Kidney (tissue), 22 donors: ENCODE measurements at regions of chr20 and their contacts with region 1.

Region 1: DNA sequence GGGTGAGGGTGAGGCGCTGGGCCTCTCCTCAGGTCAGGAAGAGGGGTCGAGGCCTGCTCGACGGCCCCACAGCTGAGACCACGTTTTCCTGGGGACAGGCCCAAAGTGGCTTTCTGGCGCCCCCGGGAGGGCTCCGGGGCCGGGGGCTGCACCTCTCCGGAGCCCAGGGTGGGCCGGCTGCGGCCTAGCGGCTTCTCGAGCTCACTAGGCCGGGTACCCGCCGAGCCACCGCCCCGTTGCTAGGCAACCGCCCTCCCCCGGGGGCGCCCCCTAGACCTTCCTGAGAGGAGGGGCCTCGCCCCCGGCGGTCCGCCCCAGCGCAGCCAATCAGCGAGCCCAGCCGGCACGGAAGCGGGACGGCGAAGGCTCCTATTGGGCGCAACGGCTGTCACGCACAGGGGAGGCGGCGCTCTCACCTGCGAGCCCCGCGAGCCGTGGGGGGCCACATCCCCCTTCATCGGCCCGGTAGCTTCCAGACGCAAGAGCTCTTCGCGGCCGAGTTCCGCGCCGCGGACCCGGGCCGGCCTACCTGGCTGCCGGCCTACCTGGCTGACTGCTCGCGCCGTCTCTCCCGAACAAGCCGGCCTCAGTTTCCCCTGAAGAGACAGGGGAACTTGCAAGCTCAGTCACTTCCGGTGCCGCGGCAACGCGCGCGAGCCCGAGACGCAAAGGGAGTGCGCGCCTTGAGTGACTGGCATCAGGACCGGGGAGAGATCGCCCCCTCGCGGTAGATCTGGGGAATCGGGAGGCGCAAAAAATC is 831 bp upstream of the BCL2L1 start:
- DNase-seq: peak; percentile 99 to 100 (median 99)
- H3K4me3 ChIP-seq: peak overlapping the region; percentile 75 to 85 (median 76)
- H3K27ac ChIP-seq: peak overlapping the region; percentile 98 to 99
- H3K4me1 ChIP-seq: peaks cover 4 to 19% (median 13%) of the 10 kb centered on the region in 3 donors
- H3K27me3 ChIP-seq: no peaks in the 10 kb centered on the region
- CTCF ChIP-seq: peak; percentile 97

Region 2: GRCh38 chr20:31605031-31605901 is 118.2 kb before region 1 on chr20 and contains the start of gene ID1:
- intact Hi-C with region 1: no loop called
- DNase-seq: peak; percentile 98 to 99 (median 99)
- H3K4me3 ChIP-seq: peak within 1 kb of the TSS; percentile 85 to 95 (median 93)
- H3K27ac ChIP-seq: peak within 1 kb of the TSS; percentile 93 to 94
- H3K4me1 ChIP-seq: peaks cover 6 to 14% (median 13%) of the 10 kb centered on the region in 3 donors
- H3K27me3 ChIP-seq: no peaks in the 10 kb centered on the region
- CTCF ChIP-seq: no peak
- total RNA-seq, gene ID1: 189 TPM

Region 3: DNA sequence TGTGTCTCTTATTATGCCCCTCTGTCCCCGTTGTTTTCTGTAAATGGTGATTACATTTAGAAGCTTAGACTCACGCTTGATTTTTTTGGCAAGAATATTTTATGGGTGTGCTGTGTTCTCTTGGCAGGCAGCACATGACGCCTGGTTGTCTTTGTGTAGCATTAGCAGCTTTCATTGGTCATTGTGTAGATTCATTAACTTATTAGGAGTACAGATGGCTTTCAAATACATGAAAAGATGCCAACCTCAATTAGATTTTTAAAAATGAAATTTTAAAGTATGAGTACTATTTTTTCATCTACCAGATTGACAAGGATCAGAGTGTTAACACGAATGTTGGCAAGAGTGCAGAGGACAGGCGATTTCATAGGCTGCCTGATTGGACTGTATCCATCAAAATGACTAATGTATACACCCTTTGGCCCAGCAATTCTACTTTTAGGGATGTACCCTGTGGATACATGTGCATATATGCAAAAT is 70.5 kb before region 1 on chr20:
- intact Hi-C with region 1: no loop called
- DNase-seq: peak in 1 of 5 donors; percentile 22
- H3K4me3 ChIP-seq: no peak overlapping the region
- H3K27ac ChIP-seq: no peak overlapping the region
- H3K4me1 ChIP-seq: no peaks in the 10 kb centered on the region
- H3K27me3 ChIP-seq: no peaks in the 10 kb centered on the region
- CTCF ChIP-seq: no peak

Region 4: GRCh38 chr20:31666258-31667042 is 57.0 kb before region 1 on chr20:
- intact Hi-C with region 1: loop called (anchors 5 kb)
- DNase-seq: no peak
- H3K4me3 ChIP-seq: no peak overlapping the region
- H3K27ac ChIP-seq: peak overlapping the region; percentile 73 to 92
- H3K4me1 ChIP-seq: peaks cover 0 to 69% (median 51%) of the 10 kb centered on the region in 3 donors
- H3K27me3 ChIP-seq: no peaks in the 10 kb centered on the region
- CTCF ChIP-seq: no peak

Region 5: DNA sequence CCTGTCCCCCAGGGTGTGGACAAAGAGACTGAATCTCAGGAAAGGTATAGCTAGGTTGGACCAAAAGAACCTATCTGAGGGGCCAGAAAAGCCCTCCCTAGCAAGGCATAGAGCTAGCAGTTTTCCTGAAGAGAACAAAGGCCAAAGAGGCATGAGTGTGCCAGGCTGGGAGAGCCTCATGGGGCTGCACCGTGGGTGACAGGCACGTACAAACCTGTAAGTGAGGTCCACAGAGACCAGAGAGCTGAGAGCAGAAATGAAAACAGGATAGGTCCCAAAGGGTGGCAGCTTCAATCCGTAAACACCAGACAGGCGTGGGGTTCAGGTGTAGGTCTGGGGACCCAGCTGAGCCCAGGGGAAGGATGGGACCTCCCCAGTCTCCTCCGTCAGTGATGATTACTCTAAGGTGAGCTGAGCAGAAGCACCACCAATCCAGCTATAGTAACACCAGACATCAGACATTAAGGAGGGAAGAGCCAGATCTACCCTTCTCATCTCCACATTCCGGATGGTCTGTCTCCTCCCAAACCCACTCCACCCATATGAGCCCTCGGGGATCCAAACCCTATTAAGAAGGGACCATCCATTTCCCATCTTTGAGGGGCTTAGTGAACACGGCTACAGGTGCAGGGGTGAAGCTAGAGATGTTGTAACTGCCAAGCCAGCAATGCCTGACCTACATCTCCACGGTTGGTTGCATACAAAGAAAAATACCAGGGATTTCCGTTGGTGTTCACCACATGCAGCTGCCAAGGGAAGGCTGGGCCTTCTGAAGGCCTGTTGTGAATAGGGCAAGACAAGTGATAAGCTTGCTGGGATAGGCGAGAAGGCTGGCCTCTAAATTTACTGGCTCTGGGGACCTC is 39.1 kb before region 1 on chr20:
- intact Hi-C with region 1: loop called (anchors 5 kb)
- DNase-seq: peak in 2 of 5 donors; percentile 56 to 60
- H3K4me3 ChIP-seq: no peak overlapping the region
- H3K27ac ChIP-seq: peak overlapping the region; percentile 16 to 46
- H3K4me1 ChIP-seq: peaks cover 0 to 51% (median 44%) of the 10 kb centered on the region in 3 donors
- H3K27me3 ChIP-seq: no peaks in the 10 kb centered on the region
- CTCF ChIP-seq: no peak